ENCODE measurements at regions of chr12 and their contacts with region 1.

Region 1: GRCh38 chr12:49358483-49359141 is 8.7 kb upstream of the SPATS2 start:
- DNase-seq: peak in 7 of 9 donors; percentile 48 to 75 (median 63)
- ATAC-seq: peak; percentile 95
- H3K4me3 ChIP-seq: no peak overlapping the region
- H3K4me3 Mint-ChIP-seq: no peak overlapping the region
- H3K27ac ChIP-seq: no peak overlapping the region
- H3K27ac Mint-ChIP-seq: no peak overlapping the region
- H3K4me1 ChIP-seq: no peaks in the 10 kb centered on the region
- H3K4me1 Mint-ChIP-seq: peaks cover 0 to 7% (median 4%) of the 10 kb centered on the region in 7 donors
- H3K27me3 ChIP-seq: no peaks in the 10 kb centered on the region
- H3K27me3 Mint-ChIP-seq: peaks cover 8 to 48% (median 30%) of the 10 kb centered on the region in 5 donors

Region 2: GRCh38 chr12:49388682-49389386 is 30.2 kb after region 1 on chr12:
- CTCF ChIA-PET with region 1: interaction called, 3 read pairs
- POLR2A ChIA-PET with region 1: no interaction called
- intact Hi-C with region 1: loop called in 1 of 2 experiments (anchors 1 kb)
- DNase-seq: peak; percentile 29 to 66 (median 56)
- ATAC-seq: peak; percentile 96
- H3K4me3 ChIP-seq: no peak overlapping the region
- H3K4me3 Mint-ChIP-seq: peak overlapping the region in 9 of 10 donors; percentile 12 to 74 (median 63)
- H3K27ac ChIP-seq: no peak overlapping the region
- H3K27ac Mint-ChIP-seq: peak overlapping the region in 1 of 9 donors; percentile 36
- H3K4me1 ChIP-seq: no peaks in the 10 kb centered on the region
- H3K4me1 Mint-ChIP-seq: peaks cover 0 to 11% (median 4%) of the 10 kb centered on the region in 7 donors
- H3K27me3 ChIP-seq: no peaks in the 10 kb centered on the region
- H3K27me3 Mint-ChIP-seq: no peaks in the 10 kb centered on the region

Region 3: GRCh38 chr12:49503674-49504180 is 145.1 kb after region 1 on chr12:
- CTCF ChIA-PET with region 1: interaction called, 270 read pairs
- POLR2A ChIA-PET with region 1: no interaction called
- intact Hi-C with region 1: no loop called
- DNase-seq: no peak
- ATAC-seq: no peak
- H3K4me3 ChIP-seq: no peak overlapping the region
- H3K4me3 Mint-ChIP-seq: no peak overlapping the region
- H3K27ac ChIP-seq: no peak overlapping the region
- H3K27ac Mint-ChIP-seq: no peak overlapping the region
- H3K4me1 ChIP-seq: peaks cover 0 to 8% of the 10 kb centered on the region in 2 donors
- H3K4me1 Mint-ChIP-seq: peaks cover 1 to 21% (median 13%) of the 10 kb centered on the region in 7 donors
- H3K27me3 ChIP-seq: no peaks in the 10 kb centered on the region
- H3K27me3 Mint-ChIP-seq: no peaks in the 10 kb centered on the region

Region 4: DNA sequence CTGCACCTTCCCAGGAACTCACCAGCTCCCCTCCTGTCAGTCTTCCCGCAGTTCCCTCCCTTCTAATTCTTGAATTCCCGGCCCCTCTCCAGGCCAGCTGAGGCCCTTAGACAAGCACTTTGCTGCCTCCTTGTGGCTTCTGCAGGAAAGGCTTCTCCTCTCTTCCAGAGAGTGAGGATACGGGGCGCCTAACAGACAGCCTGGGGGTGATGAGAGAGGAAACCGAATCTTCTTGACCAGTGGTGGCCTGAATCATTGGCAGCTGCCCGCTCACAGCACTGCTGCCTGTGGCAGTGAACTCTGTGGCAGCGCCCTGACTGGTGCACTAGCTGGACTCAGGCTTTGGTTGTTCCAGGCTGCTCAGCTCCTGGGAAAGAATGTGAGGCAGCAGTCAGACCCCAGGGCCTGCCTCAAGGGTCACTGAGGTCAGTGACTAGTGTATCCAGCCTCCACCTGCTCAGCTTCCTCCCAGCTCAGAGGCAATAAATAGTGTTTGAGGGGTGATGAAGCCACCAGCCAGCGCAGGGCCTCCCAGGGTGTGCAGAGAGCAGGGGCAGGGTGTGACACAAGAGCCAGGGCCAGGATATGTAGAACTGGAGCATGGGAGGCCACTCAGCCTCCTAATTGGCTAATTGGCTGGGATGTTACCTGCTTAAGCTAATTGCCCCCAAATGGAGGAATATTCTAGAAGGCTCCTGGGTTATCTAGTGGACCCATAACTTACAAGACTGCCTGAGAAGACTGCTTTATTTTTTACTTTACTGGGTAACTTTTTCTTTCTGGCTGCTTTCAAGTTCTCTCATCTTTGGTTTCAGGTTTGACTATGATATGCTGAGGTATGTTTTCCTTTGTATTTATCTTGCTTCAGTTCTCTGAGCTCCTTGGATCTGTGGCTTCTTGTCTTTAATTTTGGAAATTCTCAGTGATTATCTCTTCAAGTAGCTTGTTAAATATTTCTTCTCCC is 222.2 kb after region 1 on chr12:
- CTCF ChIA-PET with region 1: interaction called, 30 read pairs
- POLR2A ChIA-PET with region 1: no interaction called
- intact Hi-C with region 1: loop called (anchors 1 kb)
- DNase-seq: peak; percentile 26 to 55 (median 43)
- ATAC-seq: peak; percentile 80
- H3K4me3 ChIP-seq: no peak overlapping the region
- H3K4me3 Mint-ChIP-seq: no peak overlapping the region
- H3K27ac ChIP-seq: no peak overlapping the region
- H3K27ac Mint-ChIP-seq: peak overlapping the region in 1 of 9 donors; percentile 5
- H3K4me1 ChIP-seq: peaks cover 3 to 5% of the 10 kb centered on the region in 2 donors
- H3K4me1 Mint-ChIP-seq: peaks cover 12 to 18% (median 16%) of the 10 kb centered on the region in 7 donors
- H3K27me3 ChIP-seq: no peaks in the 10 kb centered on the region
- H3K27me3 Mint-ChIP-seq: no peaks in the 10 kb centered on the region